ENCODE measurements at regions of chr10 and their contacts with region 1.

Region 1: DNA sequence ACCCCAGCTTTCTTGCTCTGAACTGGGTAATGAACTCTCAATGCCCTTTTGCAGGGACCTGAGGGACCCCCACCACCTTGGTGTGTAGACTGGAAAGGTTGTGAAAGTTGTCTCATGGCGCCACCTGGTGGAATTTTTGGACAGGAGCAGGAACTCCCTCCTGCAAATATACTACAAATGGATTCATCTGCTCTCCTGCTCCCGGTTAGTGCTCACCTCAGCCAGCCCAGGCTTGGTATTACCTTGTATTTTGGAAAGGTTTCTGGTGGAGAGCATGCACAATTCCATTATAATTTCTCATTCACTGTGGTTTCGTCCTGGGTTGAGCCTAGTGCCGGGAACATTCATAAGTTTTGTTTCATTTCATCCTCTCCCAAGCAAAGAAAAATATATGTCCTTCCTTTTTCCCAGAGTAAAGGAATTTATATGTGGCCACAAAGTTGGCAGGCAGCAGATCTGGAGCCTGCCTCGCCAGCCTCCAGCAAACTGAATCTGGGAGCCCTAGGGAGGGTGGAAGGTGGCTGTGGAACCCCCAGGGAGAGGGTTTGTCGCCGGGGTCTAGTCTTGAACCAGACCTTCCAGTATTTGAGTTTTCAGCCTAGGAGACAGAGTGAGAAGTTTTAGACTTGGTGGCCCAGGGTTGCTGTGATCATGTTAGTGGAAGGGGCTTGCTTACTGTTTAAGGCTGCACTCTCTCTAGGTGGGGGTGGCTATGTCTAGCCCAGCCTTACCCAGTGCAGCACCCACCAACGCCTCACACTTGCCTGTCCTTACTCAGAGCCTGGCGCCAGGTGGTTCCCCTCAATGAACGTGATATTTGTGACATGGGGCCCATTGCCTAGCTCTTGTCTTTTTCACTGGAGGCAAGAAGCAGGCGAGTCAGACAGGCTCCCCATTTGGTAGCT is 9.5 kb downstream of the FAM241B start:
- DNase-seq: peak; percentile 70
- ATAC-seq: peak; percentile 61

Region 2: GRCh38 chr10:69318106-69318866 is 321.3 kb before region 1 on chr10:
- intact Hi-C with region 1: no loop called
- DNase-seq: peak; percentile 95
- ATAC-seq: peak; percentile 97

Region 3: GRCh38 chr10:69425511-69426298 is 213.8 kb before region 1 on chr10:
- intact Hi-C with region 1: loop called (anchors 5 kb)
- DNase-seq: no peak
- ATAC-seq: no peak

Region 4: GRCh38 chr10:69515699-69516259 is 123.8 kb before region 1 on chr10:
- intact Hi-C with region 1: loop called (anchors 5 kb)
- DNase-seq: peak; percentile 83
- ATAC-seq: peak; percentile 86

Region 5: DNA sequence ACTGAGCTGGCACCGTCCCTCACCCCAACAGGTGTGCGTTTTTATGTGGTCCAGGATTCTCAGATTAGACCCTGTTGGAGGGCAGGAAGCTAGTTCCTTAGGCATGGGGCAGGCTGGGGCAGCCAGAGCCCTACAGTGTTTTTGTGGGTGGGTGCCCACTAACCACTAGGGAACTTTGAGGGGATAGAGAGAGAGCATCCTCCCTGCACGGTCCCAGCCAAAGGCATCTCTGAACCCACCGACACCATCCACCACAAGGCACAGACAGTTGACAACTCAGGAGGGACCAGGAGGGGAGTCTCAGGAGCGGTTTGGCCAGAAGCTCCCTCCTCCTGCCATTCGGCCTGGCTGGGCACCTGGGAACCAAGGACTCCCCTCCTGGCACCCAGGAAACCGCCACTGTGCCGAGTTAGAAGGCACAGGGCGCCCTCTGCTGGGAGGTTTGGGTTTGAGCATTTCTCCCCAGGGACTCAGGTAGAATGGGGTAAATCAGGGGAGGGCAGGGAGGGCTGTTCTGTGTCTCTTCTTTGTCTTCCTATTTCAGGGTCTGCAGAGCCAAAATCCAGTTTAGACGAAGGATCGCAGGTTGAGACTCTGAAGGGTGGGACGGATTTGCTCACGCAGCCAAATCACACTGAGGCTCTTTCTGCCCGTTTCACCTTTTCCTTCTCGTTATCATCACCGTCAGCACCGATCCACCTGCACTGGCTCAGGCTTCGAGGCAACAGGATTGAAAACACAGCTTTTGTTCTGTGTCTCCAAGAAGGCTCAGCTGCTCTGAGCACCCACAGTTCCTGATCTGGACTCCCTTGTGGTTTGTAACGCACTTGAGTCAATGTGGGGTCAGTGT is 77.4 kb after region 1 on chr10:
- intact Hi-C with region 1: loop called (anchors 10 kb)
- DNase-seq: peak; percentile 74
- ATAC-seq: peak; percentile 57

Region 6: GRCh38 chr10:69914398-69915214 is 275.1 kb after region 1 on chr10:
- intact Hi-C with region 1: loop called (anchors 10 kb)
- DNase-seq: peak; percentile 80
- ATAC-seq: peak; percentile 80

Measured in left ventricle myocardium superior (tissue), 1 donor.